GM10248 (cell line): ENCODE measurements at regions of chr17 and their contacts with region 1.

Region 1: DNA sequence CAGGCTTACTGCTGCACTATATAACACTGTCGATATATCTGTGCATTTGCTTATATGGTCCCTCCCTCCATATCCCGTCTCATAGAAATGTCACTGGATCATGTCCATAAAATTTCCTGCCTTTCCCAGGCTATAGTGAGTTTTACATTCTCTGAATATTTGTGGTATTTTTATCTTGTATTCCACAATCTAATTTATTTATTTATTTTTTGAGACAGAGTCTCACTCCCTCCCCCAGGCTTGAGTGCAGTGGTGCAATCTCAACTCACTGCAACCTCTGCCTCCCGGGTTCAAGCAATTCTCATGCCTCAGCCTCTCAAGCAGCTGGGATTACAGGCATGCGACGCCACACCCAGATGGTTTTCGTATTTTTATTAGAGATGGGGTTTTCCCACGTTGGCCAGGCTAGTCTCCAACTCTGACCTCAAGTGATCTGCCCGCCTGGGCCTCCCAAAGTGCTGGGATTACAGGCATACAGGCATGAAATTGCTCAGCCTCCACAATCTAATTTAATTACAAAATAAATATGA is 12.9 kb downstream of the TRIM37 start:
- DNase-seq: no peak
- CTCF ChIP-seq: no peak

Region 2: GRCh38 chr17:59106463-59107305 is 12.9 kb after region 1 on chr17 and contains the start of gene TRIM37:
- CTCF ChIA-PET with region 1: interaction called, 15 read pairs
- POLR2A ChIA-PET with region 1: interaction called, 4 read pairs
- DNase-seq: peak; percentile 99
- CTCF ChIP-seq: no peak